HCT116 (cell line): ENCODE measurements at regions of chr14 and their contacts with region 1.

Region 1: DNA sequence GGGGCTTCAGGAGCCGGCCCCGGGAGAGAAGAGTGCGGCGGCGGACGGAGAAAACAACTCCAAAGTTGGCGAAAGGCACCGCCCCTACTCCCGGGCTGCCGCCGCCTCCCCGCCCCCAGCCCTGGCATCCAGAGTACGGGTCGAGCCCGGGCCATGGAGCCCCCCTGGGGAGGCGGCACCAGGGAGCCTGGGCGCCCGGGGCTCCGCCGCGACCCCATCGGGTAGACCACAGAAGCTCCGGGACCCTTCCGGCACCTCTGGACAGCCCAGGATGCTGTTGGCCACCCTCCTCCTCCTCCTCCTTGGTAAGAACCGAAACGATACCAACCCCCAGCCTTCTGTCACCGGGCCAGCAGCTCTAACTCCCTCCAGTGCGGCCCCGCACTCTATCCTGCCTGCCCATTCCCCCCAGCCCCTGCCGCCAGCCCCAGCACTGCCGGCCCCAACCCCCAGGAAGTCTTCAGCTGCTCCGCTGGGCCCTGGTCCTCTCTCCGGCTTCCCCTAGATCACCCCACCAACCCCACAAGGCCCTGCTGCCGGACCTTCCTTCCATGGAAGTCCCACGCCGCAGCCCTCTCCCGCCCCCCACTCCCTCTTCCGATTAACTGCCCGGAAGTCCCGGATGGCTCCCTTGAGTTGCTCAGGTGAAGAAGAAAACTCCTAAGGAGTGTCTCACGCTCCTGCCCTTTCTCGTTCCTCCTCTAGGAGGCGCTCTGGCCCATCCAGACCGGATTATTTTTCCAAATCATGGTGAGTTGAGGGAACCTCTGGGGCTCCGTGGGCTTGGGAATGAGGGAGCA is 693 bp downstream of the LRP10 start:
- DNase-seq: peak; percentile 64
- ATAC-seq: peak; percentile 69
- H3K4me3 ChIP-seq: peak overlapping the region; percentile 71 to 89
- H3K27ac ChIP-seq: peak overlapping the region; percentile 98
- H3K4me1 ChIP-seq: peaks cover 14 to 28% of the 10 kb centered on the region in 2 experiments
- H3K27me3 ChIP-seq: no peaks in the 10 kb centered on the region
- CTCF ChIP-seq: peak; percentile 84 to 98 (median 98)
- POLR2A ChIP-seq: no peak
- RAD21 ChIP-seq: peak; percentile 79

Region 2: DNA sequence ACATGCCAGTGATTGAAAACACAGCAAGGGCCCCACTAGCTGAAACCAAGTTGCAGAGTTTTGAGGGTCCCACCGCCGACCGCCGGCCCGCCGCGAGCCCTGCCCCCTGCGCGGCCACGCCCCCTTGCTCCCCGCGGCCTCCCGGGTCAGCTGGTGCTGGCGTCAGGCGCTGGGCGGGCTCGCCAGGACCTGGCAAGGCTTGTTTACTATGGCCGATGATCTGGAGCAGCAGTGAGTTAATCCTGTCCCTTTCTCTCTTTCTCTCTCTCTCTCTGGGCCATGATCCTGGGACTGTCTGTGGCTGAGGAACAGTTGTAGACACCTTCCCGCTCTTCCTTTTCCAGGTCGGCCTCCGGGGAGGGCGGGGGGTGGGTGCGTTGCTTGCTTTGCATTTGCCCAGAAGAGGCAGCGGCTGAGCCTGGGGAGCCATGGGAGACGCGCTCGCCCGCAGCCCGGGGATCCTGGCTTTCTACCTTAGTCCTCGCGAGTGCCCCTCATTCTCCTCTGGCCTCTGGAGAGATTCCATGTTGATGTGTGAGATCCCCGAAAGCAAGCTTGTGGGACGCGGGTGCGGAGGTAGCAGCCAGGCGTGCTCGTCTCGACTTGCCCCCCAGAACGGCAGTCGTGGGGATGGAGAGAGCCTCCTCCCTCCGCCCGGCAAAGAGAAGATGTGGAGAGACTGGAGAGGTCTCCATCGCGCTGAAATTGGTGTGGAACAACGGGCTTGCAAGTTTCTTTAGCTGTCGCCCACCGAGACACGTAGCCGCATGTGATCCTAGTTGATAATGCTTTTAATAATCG is 273.9 kb before region 1 on chr14 and contains the start of gene ABHD4:
- CTCF ChIA-PET with region 1: no interaction called
- POLR2A ChIA-PET with region 1: no interaction called
- RAD21 ChIA-PET with region 1: no interaction called
- intact Hi-C with region 1: no loop called
- DNase-seq: no peak
- ATAC-seq: peak; percentile 89
- H3K4me3 ChIP-seq: peak within 1 kb of the TSS; percentile 81 to 86
- H3K27ac ChIP-seq: peak within 1 kb of the TSS; percentile 69
- H3K4me1 ChIP-seq: peaks cover 13 to 45% of the 10 kb centered on the region in 2 experiments
- H3K27me3 ChIP-seq: peaks cover 4% of the 10 kb centered on the region; the same call in 1 of the 2 replicates
- CTCF ChIP-seq: no peak
- POLR2A ChIP-seq: peak; percentile 32
- RAD21 ChIP-seq: no peak
- total RNA-seq, gene ABHD4: 9.4 TPM

Region 3: GRCh38 chr14:22861651-22862050 is 10.6 kb before region 1 on chr14:
- CTCF ChIA-PET with region 1: interaction called, 10 read pairs
- POLR2A ChIA-PET with region 1: interaction called, 3 read pairs
- RAD21 ChIA-PET with region 1: no interaction called
- intact Hi-C with region 1: no loop called
- DNase-seq: no peak
- ATAC-seq: no peak
- H3K4me3 ChIP-seq: no peak overlapping the region
- H3K27ac ChIP-seq: no peak overlapping the region
- H3K4me1 ChIP-seq: no peaks in the 10 kb centered on the region
- H3K27me3 ChIP-seq: no peaks in the 10 kb centered on the region
- CTCF ChIP-seq: no peak
- POLR2A ChIP-seq: no peak
- RAD21 ChIP-seq: no peak

Region 4: GRCh38 chr14:22886500-22887259 is 14.4 kb after region 1 on chr14:
- CTCF ChIA-PET with region 1: interaction called, 51 read pairs
- POLR2A ChIA-PET with region 1: interaction called, 24 read pairs
- RAD21 ChIA-PET with region 1: no interaction called
- intact Hi-C with region 1: loop called (anchors 1 kb)
- DNase-seq: peak; percentile 49
- ATAC-seq: peak; percentile 81
- H3K4me3 ChIP-seq: peak overlapping the region; percentile 60 to 68
- H3K27ac ChIP-seq: peak overlapping the region; percentile 93
- H3K4me1 ChIP-seq: peaks cover 31 to 43% of the 10 kb centered on the region in 2 experiments
- H3K27me3 ChIP-seq: no peaks in the 10 kb centered on the region
- CTCF ChIP-seq: no peak; a peak in 1 of 6 replicates
- POLR2A ChIP-seq: peak; percentile 66
- RAD21 ChIP-seq: no peak

Region 5: DNA sequence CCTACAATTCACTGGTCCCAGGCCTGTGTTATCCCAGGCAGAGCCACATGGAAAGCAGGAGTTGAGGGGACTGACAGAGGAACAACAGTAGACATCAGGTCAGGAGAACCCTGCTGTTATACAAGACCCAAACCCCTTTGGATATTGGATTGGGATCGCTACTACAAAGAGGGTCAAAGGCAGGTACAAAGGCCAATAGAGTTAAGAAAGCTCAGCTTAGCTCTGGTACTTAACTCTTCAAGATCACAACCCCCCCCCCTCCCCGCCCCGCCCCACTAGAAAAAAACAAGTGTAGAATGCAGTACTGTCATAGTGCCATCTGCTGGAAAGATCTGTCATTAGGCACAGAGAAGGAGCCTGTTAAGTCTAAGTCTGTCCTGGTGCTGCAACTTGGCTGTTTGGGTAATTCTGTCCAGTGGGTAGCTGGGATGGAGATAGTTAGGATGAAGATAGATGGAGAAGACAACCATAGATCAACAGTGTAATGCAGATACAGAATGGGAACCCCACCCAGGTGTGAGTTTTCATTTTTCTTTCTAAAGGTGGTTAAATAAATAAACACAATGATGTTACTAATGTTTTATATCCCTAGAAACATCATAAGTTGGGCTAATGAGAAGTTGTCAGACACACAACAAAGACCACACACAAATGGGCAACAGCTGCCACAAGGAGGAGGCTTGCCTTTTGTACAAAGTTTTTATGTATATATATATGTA is 28.0 kb after region 1 on chr14:
- CTCF ChIA-PET with region 1: interaction called, 10 read pairs
- POLR2A ChIA-PET with region 1: no interaction called
- RAD21 ChIA-PET with region 1: interaction called, 3 to 5 read pairs
- intact Hi-C with region 1: loop called (anchors 1 kb)
- DNase-seq: peak; percentile 70
- ATAC-seq: peak; percentile 87
- H3K4me3 ChIP-seq: no peak overlapping the region
- H3K27ac ChIP-seq: 0 out of 2 replicates have a peak overlapping the region, but pooled peaks have one; percentile 17
- H3K4me1 ChIP-seq: peaks cover 0 to 22% of the 10 kb centered on the region in 2 experiments; a peak in 2 of 4 replicates
- H3K27me3 ChIP-seq: no peaks in the 10 kb centered on the region
- CTCF ChIP-seq: peak; percentile 62 to 76 (median 67); a peak in 5 of 6 replicates
- POLR2A ChIP-seq: no peak
- RAD21 ChIP-seq: peak; percentile 68

Region 6: GRCh38 chr14:22918804-22919600 is 46.8 kb after region 1 on chr14 and contains the start of gene RBM23:
- CTCF ChIA-PET with region 1: no interaction called
- POLR2A ChIA-PET with region 1: interaction called, 3 read pairs
- RAD21 ChIA-PET with region 1: no interaction called
- intact Hi-C with region 1: loop called (anchors 5 kb)
- DNase-seq: peak; percentile 100
- ATAC-seq: peak; percentile 96
- H3K4me3 ChIP-seq: peak within 1 kb of the TSS; percentile 97 to 98
- H3K27ac ChIP-seq: peak within 1 kb of the TSS; percentile 94
- H3K4me1 ChIP-seq: peaks cover 9 to 30% of the 10 kb centered on the region in 2 experiments
- H3K27me3 ChIP-seq: no peaks in the 10 kb centered on the region
- CTCF ChIP-seq: no peak
- POLR2A ChIP-seq: peak; percentile 63
- RAD21 ChIP-seq: no peak
- total RNA-seq, gene RBM23: 67.2 TPM